Panc1 (cell line): ENCODE measurements at regions of chr15 and their contacts with region 1.

Region 1: GRCh38 chr15:66459818-66460615 is 37.5 kb downstream of the SNAPC5 start:
- DNase-seq: no peak
- ATAC-seq: no peak
- H3K4me3 ChIP-seq: no peak overlapping the region
- H3K27ac ChIP-seq: no peak overlapping the region
- H3K4me1 ChIP-seq: no peaks in the 10 kb centered on the region
- H3K27me3 ChIP-seq: no peaks in the 10 kb centered on the region
- CTCF ChIP-seq: no peak

Region 2: DNA sequence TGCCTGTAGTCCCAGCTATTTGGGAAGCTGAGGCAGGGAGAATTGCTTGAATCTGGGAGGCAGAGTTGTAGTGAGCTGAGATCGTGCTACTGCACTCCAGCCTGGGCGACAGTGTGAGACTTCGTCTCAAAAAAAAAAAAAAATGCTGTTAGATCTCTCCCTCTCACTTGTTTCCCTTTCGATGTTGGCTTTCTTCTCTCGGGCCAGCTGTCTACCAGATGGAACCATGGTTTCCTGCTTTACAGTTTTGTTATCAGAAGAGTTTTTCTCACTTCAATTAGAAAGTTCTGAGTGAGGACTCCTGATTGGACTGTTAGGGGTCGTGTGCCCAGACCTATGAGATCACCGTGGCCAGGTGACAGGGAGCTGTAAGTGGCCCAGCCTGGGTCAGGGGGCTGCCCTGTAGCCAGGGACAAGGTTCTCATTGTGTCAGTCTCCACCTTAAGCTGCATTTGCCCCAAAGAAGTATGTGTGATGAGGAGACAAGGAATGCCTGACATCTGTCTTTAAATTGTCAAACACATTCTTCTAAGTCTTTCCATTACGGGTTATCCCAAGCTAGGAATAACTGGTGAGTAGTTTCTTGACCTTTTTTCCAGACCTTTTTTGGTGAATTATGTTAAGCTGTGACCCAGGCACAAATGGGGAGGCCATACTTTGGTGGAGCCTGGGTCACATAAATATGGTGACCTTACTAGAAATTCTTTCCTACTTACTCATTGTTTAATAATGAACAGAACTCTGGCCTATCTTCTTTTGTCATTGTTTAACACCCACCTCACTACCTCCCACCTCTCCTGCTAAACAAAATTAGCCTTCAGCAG is 12.4 kb after region 1 on chr15:
- CTCF ChIA-PET with region 1: no interaction called
- POLR2A ChIA-PET with region 1: interaction called, 16 read pairs
- in situ Hi-C with region 1: no loop called
- intact Hi-C with region 1: no loop called
- DNase-seq: no peak
- ATAC-seq: 0 out of 2 replicates have a peak, but pooled peaks have one; percentile 57
- H3K4me3 ChIP-seq: no peak overlapping the region
- H3K27ac ChIP-seq: no peak overlapping the region
- H3K4me1 ChIP-seq: no peaks in the 10 kb centered on the region
- H3K27me3 ChIP-seq: no peaks in the 10 kb centered on the region
- CTCF ChIP-seq: no peak

Region 3: GRCh38 chr15:66650434-66650833 is 190.4 kb after region 1 on chr15:
- CTCF ChIA-PET with region 1: no interaction called
- POLR2A ChIA-PET with region 1: no interaction called
- in situ Hi-C with region 1: no loop called
- intact Hi-C with region 1: no loop called
- DNase-seq: no peak
- ATAC-seq: peak; percentile 43; the same call in 1 of the 2 replicates
- H3K4me3 ChIP-seq: no peak overlapping the region
- H3K27ac ChIP-seq: no peak overlapping the region
- H3K4me1 ChIP-seq: peaks cover 21% of the 10 kb centered on the region
- H3K27me3 ChIP-seq: no peaks in the 10 kb centered on the region
- CTCF ChIP-seq: no peak